BJ (cell line): ENCODE measurements at regions of chr1 and their contacts with region 1.

Region 1: DNA sequence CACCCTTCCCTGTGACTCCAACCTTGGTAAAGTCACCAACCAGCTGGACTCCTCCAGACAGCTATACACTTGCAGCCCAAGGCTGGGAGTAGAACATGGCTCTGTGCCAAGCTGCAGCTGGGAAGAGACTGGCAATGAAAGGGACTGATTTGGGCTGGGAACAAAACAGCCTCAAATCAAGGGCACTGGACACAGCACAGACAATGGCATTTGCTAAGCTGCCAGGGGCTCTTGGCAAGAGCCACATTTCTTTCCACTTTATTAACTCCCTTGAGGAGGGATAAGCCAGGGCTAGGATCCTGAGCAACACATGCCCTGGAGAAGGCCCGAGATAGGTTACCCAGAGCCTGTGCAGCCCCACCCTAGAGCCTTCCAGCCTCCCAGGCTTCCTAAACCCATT is 12.0 kb downstream of the SYT11 start:
- DNase-seq: no peak
- H3K4me3 ChIP-seq: no peak overlapping the region
- H3K27me3 ChIP-seq: no peaks in the 10 kb centered on the region
- CTCF ChIP-seq: no peak

Region 2: GRCh38 chr1:155884031-155884960 is 12.9 kb after region 1 on chr1:
- CTCF ChIA-PET with region 1: interaction called, 19 read pairs
- POLR2A ChIA-PET with region 1: no interaction called
- DNase-seq: no peak
- H3K4me3 ChIP-seq: no peak overlapping the region
- H3K27me3 ChIP-seq: no peaks in the 10 kb centered on the region
- CTCF ChIP-seq: no peak

Region 3: DNA sequence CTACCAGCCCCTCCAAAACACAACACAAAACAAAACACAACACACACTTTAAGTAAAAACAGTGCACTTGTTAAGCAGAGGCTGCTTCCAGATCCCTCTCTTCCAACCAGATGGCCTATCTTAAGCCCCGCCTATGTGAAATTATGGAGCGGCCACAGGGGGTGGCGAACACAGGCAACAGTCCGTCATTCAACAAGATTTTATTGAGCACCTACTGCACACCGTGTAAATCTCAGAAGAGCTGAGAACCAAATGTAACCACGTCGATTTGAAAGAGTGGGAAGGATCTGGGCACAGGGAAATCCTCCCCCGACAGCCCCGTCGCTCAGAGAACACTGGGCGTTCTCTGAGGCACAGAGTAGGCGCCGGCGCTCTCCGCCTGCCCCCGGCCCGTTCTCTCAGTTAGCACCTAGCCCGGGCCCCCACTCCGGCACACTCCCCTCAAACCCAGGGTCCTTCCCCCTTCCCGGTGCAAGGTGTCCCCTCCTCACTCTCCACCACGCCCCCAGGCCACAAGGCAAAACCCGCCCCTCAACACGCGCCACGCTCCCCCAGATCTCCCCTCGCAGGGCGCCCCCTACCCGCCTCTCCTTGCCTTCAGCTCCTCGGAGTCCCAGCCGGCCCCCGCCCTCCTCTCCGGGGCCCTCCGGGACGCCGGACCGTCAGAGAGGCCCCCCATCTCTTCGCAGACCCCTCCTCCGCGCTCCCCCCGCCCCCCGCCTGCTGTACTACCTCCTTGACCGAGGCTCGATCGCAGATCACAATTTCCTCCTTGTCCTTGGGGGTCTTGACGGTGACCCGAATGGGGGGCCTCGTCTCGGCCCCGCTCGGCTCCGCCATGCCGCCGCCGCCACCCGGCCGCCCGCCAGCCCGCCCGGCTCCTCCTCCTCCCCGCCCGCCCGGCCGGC is 181.7 kb after region 1 on chr1:
- CTCF ChIA-PET with region 1: no interaction called
- POLR2A ChIA-PET with region 1: interaction called, 20 read pairs
- DNase-seq: no peak
- H3K4me3 ChIP-seq: peak overlapping the region; percentile 86
- H3K27me3 ChIP-seq: no peaks in the 10 kb centered on the region
- CTCF ChIP-seq: peak; percentile 49